ENCODE measurements at regions of chr4 and their contacts with region 1.

Region 1: DNA sequence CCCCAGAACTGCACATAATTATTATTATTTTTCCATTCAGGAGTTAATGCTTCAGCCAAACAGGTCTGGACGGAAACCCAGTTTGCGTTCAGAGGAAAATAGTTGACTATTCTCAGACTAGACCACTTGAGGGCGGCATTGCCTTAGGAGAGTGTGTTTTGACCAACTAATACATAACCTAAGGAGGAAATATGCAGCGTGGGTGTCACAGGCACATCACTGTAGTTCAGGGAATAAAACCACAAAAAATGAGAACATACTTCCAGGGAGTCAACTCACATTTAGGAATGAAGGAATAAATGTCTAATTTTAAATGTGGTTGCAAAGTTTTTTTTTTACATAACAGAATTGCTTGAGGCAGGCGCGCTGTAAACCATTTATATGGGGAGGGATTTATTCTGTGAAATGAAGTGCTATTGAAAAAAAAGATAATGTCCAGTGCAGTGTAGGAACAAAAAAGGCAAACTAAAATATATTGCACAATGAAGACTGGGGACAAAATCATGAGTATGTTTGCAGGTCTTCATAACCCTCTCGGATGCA is 93.3 kb downstream of the SYNPO2 start:
- DNase-seq: peak; percentile 16 to 61 (median 50)
- ATAC-seq: peak; percentile 81
- H3K4me3 ChIP-seq: no peak overlapping the region
- H3K4me3 Mint-ChIP-seq: no peak overlapping the region
- H3K27ac ChIP-seq: no peak overlapping the region
- H3K27ac Mint-ChIP-seq: no peak overlapping the region
- H3K4me1 ChIP-seq: no peaks in the 10 kb centered on the region
- H3K4me1 Mint-ChIP-seq: peaks cover 2% of the 10 kb centered on the region
- H3K27me3 ChIP-seq: no peaks in the 10 kb centered on the region
- H3K27me3 Mint-ChIP-seq: peaks cover 5% of the 10 kb centered on the region
- CTCF ChIP-seq: peak; percentile 75

Region 2: DNA sequence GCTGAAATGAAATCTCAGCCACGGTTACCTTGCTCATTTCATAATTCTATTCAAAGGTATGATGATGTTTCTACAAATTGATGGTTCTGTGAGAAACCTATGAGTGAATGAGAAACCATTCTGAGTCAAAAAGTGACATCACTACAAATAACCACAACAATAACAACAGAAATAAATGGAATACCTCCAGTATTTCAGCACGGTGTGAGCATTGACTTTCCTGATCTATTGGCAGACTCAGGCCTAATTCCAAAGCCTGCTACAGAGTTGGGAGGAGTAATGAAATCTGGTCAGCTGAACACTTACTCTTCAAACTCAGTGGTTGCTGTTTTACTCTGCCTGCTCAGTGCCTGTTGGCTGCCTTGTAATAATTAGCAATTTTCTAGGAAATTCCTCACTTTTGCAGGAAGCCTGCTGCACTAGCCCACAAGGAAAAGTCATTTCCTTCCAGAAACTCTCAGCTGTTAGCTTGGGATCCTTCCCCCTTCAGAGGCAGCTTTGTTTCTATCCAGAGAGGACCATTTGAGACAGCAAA is 112.0 kb before region 1 on chr4:
- CTCF ChIA-PET with region 1: no interaction called
- POLR2A ChIA-PET with region 1: no interaction called
- intact Hi-C with region 1: no loop called
- DNase-seq: no peak
- ATAC-seq: no peak
- H3K4me3 ChIP-seq: no peak overlapping the region
- H3K4me3 Mint-ChIP-seq: no peak overlapping the region
- H3K27ac ChIP-seq: no peak overlapping the region
- H3K27ac Mint-ChIP-seq: no peak overlapping the region
- H3K4me1 ChIP-seq: no peaks in the 10 kb centered on the region
- H3K4me1 Mint-ChIP-seq: no peaks in the 10 kb centered on the region
- H3K27me3 ChIP-seq: no peaks in the 10 kb centered on the region
- H3K27me3 Mint-ChIP-seq: no peaks in the 10 kb centered on the region
- CTCF ChIP-seq: no peak

Region 3: DNA sequence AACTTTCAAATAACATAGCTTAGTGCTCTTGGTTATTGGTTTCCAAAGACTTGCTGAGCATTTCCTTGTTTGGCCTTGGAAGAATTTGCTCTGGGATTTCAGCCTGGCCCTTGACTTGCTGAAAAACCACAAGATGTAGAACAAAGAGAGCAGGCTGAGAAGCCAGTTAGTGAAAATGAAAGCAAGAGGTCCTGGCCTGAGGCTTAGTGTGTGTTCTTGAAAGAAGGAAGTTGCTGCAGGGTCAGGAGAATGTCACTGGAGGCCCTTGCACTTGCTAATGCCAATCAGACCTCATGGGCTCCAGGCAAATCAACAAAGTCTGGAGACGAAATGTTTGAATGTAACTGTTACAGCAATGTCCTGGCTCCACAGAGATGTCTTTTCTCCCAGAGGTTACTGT is 13.9 kb before region 1 on chr4:
- CTCF ChIA-PET with region 1: interaction called, 14 read pairs
- POLR2A ChIA-PET with region 1: no interaction called
- intact Hi-C with region 1: no loop called
- DNase-seq: peak in 2 of 9 experiments; percentile 1 to 30
- ATAC-seq: no peak
- H3K4me3 ChIP-seq: no peak overlapping the region
- H3K4me3 Mint-ChIP-seq: no peak overlapping the region
- H3K27ac ChIP-seq: no peak overlapping the region
- H3K27ac Mint-ChIP-seq: no peak overlapping the region
- H3K4me1 ChIP-seq: peaks cover 6% of the 10 kb centered on the region
- H3K4me1 Mint-ChIP-seq: peaks cover 7% of the 10 kb centered on the region
- H3K27me3 ChIP-seq: peaks cover 0 to 2% of the 10 kb centered on the region in 2 experiments
- H3K27me3 Mint-ChIP-seq: no peaks in the 10 kb centered on the region
- CTCF ChIP-seq: no peak

Region 4: GRCh38 chr4:119139822-119140252 is 157.9 kb after region 1 on chr4:
- CTCF ChIA-PET with region 1: no interaction called
- POLR2A ChIA-PET with region 1: no interaction called
- intact Hi-C with region 1: no loop called
- DNase-seq: peak in 2 of 9 experiments; percentile 1 to 23
- ATAC-seq: no peak
- H3K4me3 ChIP-seq: peak overlapping the region in 1 of 2 experiments; percentile 20
- H3K4me3 Mint-ChIP-seq: peak overlapping the region; percentile 69
- H3K27ac ChIP-seq: peak overlapping the region; percentile 14 to 60
- H3K27ac Mint-ChIP-seq: peak overlapping the region; percentile 81
- H3K4me1 ChIP-seq: peaks cover 35% of the 10 kb centered on the region
- H3K4me1 Mint-ChIP-seq: peaks cover 47% of the 10 kb centered on the region
- H3K27me3 ChIP-seq: no peaks in the 10 kb centered on the region
- H3K27me3 Mint-ChIP-seq: no peaks in the 10 kb centered on the region
- CTCF ChIP-seq: no peak

Region 5: GRCh38 chr4:119286377-119287002 is 304.6 kb after region 1 on chr4:
- CTCF ChIA-PET with region 1: interaction called, 3 read pairs
- POLR2A ChIA-PET with region 1: no interaction called
- intact Hi-C with region 1: loop called (anchors 1 kb)
- DNase-seq: peak in 5 of 9 experiments; percentile 21 to 69 (median 34)
- ATAC-seq: peak; percentile 55
- H3K4me3 ChIP-seq: no peak overlapping the region
- H3K4me3 Mint-ChIP-seq: no peak overlapping the region
- H3K27ac ChIP-seq: no peak overlapping the region
- H3K27ac Mint-ChIP-seq: no peak overlapping the region
- H3K4me1 ChIP-seq: peaks cover 3% of the 10 kb centered on the region
- H3K4me1 Mint-ChIP-seq: peaks cover 30% of the 10 kb centered on the region
- H3K27me3 ChIP-seq: no peaks in the 10 kb centered on the region
- H3K27me3 Mint-ChIP-seq: no peaks in the 10 kb centered on the region
- CTCF ChIP-seq: peak; percentile 81

Region 6: GRCh38 chr4:119490335-119490734 is 508.4 kb after region 1 on chr4:
- CTCF ChIA-PET with region 1: no interaction called
- POLR2A ChIA-PET with region 1: no interaction called
- intact Hi-C with region 1: loop called in 1 of 2 experiments (anchors 2 kb)
- DNase-seq: peak in 1 of 9 experiments; percentile 8
- ATAC-seq: no peak
- H3K4me3 ChIP-seq: no peak overlapping the region
- H3K4me3 Mint-ChIP-seq: no peak overlapping the region
- H3K27ac ChIP-seq: no peak overlapping the region
- H3K27ac Mint-ChIP-seq: no peak overlapping the region
- H3K4me1 ChIP-seq: no peaks in the 10 kb centered on the region
- H3K4me1 Mint-ChIP-seq: no peaks in the 10 kb centered on the region
- H3K27me3 ChIP-seq: no peaks in the 10 kb centered on the region
- H3K27me3 Mint-ChIP-seq: no peaks in the 10 kb centered on the region
- CTCF ChIP-seq: no peak

Region 7: DNA sequence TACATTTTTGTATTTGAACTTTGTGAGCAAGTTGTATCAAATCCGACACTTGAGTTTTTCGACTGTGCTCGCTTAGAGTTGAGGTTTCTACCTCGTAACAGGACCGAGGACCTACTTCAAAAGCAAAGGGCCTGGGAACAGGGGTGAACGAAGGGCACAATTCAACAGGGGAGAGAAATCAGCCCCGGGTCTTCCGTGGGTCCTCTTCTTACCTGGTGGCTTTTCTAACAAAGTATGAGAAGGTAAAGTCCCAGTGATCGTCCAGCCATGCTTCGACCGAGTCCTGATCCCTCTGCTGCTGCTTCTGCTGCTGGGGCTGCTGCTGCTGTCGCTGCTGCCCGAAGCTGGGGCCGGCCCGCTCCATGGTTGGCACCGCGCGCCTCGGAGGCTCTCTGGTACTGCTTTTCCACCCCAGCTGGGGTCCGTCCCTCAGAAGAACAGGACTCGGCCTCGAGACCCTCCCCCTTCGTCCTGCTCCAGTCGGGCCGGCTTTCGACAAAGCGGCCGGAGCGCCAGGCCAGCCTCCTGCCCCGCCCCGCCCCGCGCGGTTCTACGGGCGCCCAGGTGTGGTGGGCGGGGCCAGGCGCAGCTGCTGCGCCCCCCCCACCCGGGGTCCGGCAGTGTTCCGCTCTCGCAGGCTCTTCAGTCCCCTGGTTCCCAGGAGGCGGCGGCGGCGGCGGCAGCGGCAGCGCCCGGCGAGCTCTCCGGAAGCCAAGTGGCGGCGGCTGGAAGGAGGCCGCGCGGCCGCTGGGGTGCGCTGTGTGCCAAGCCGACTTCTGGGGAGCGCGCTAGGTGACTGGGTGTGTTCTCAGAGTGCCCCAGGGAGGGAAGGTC is 646.6 kb after region 1 on chr4 and contains the start of gene PDE5A:
- CTCF ChIA-PET with region 1: interaction called, 4 read pairs
- POLR2A ChIA-PET with region 1: no interaction called
- intact Hi-C with region 1: loop called (anchors 5 kb)
- DNase-seq: peak; percentile 52 to 85 (median 76)
- ATAC-seq: peak; percentile 76
- H3K4me3 ChIP-seq: peak within 1 kb of the TSS; percentile 73 to 78
- H3K4me3 Mint-ChIP-seq: peak within 1 kb of the TSS; percentile 88
- H3K27ac ChIP-seq: peak within 1 kb of the TSS in 1 of 2 experiments; percentile 50
- H3K27ac Mint-ChIP-seq: peak within 1 kb of the TSS; percentile 71
- H3K4me1 ChIP-seq: peaks cover 9% of the 10 kb centered on the region
- H3K4me1 Mint-ChIP-seq: peaks cover 23% of the 10 kb centered on the region
- H3K27me3 ChIP-seq: no peaks in the 10 kb centered on the region
- H3K27me3 Mint-ChIP-seq: peaks cover 7% of the 10 kb centered on the region
- CTCF ChIP-seq: peak; percentile 74
- total RNA-seq, gene PDE5A: 0.11 to 0.25 TPM

Region 8: GRCh38 chr4:120049732-120050494 is 1068.0 kb after region 1 on chr4:
- CTCF ChIA-PET with region 1: interaction called, 4 read pairs
- POLR2A ChIA-PET with region 1: no interaction called
- intact Hi-C with region 1: loop called (anchors 1 kb)
- DNase-seq: peak; percentile 46 to 80 (median 73)
- ATAC-seq: peak; percentile 98
- H3K4me3 ChIP-seq: no peak overlapping the region
- H3K4me3 Mint-ChIP-seq: peak overlapping the region; percentile 54
- H3K27ac ChIP-seq: no peak overlapping the region
- H3K27ac Mint-ChIP-seq: no peak overlapping the region
- H3K4me1 ChIP-seq: no peaks in the 10 kb centered on the region
- H3K4me1 Mint-ChIP-seq: peaks cover 2% of the 10 kb centered on the region
- H3K27me3 ChIP-seq: no peaks in the 10 kb centered on the region
- H3K27me3 Mint-ChIP-seq: no peaks in the 10 kb centered on the region
- CTCF ChIP-seq: peak; percentile 90

Measured in CD8-positive, alpha-beta T cell (primary cell).